Left cardiac atrium (tissue), 4 donors: ENCODE measurements at regions of chr20 and their contacts with region 1.

Region 1: GRCh38 chr20:37534401-37535157 is 6.9 kb upstream of the BLCAP start:
- DNase-seq: no peak
- ATAC-seq: peak; percentile 85 to 92

Region 2: DNA sequence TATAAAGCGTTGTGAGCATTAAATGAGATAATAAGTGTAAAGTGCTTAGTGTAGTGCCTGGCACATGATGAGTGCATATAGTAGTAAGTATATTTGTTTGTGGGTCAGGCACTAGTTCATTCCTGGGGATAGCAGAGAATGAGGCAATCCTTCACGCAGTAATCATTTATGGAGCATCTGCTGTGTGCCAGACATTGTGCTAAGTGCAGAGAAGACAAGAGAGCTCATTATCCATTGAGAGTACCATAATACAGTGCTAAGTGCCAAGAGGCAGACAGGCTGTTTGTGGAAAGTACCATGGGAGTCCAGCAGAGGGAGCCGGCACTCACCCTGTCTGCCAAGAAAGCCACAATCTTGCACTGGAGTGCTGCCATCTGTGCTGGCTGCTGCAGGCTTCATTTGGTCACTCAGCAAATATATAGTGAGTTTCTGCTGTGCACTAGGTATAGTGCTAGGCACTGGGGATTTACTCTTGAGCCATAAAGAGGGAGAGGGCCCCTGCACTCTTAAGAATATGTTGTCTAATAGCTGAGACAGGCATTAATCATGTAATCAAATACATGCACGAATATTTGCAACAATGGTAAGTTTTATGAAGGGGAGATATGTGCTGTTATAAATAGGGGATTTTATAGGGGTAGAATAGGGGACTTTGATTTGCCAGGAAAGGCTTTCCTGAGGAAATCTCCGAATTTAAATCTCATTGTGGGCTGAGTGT is 342.3 kb before region 1 on chr20:
- intact Hi-C with region 1: loop called in 1 of 2 experiments (anchors 5 kb)
- DNase-seq: peak; percentile 89
- ATAC-seq: peak; percentile 87 to 92

Region 3: GRCh38 chr20:37202267-37202943 is 332.2 kb before region 1 on chr20:
- intact Hi-C with region 1: loop called (anchors 5 kb)
- DNase-seq: no peak
- ATAC-seq: peak; percentile 78 to 89

Region 4: DNA sequence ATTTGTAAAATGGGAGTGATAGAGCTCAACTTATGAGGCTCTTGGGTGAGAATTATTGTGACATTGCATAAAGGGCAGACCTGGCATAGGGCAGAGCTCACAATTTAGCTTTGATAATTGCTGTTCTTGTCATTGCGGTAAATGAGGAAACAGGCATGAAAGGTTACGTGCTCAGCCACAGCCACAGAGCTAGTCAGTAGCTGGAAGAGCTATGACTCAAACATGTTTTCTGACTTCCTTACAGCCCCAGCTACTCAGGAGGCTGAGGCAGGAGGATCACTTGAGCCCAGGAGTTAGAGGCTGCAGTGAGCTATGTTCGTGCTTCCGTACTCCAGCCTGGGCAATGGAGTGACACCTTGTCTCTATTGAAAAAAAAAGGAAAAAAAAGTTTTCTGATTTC is 269.4 kb before region 1 on chr20:
- intact Hi-C with region 1: loop called (anchors 2 to 5 kb)
- DNase-seq: no peak
- ATAC-seq: no peak

Region 5: DNA sequence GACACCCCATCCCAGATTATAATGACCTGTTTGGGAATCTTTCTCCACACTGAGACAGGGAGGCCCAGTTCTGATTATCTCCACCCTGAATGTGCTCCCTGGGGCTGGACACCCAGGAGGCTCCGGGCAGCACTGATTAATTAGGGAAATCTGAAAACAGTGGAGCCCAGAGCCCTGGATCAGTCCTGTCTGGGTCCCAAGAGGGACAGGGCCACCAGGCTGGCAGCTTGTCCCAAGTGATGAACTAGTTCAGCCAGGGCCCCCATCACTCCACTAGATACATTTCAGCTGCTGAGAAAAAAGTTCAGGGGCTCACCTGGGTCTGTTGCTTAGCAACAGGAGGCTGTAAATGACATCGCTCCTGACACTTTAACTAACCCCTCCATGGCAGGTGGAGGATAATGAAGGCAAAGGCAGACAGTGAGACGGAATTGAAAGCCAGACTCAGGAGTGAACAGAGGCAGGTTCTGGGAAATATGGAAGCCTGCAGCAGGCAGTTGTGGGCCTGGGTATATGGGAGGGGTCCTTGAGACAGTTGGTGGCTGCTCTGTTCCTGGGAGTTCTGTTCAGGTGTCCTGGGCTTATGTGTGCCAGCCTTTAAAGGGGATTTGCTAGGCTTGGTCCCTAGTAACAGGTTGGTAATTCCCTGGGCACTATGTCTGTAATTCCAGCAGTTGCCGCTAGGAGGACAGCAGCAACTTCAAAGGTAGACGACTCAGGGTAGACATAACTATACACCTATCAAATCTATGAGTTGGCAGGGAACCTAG is 80.9 kb after region 1 on chr20:
- intact Hi-C with region 1: no loop called
- DNase-seq: no peak
- ATAC-seq: peak in 1 of 2 donors; percentile 52

Region 6: GRCh38 chr20:37856932-37857660 is 322.5 kb after region 1 on chr20:
- intact Hi-C with region 1: no loop called
- DNase-seq: no peak
- ATAC-seq: no peak